B cell (primary cell): ENCODE measurements at regions of chr12 and their contacts with region 1.

Region 1: GRCh38 chr12:12376646-12377448 is 20.0 kb downstream of the BORCS5 start:
- DNase-seq: peak; percentile 78
- ATAC-seq: peak; percentile 64
- H3K4me3 ChIP-seq: no peak overlapping the region
- H3K4me3 Mint-ChIP-seq: no peak overlapping the region
- H3K27ac ChIP-seq: no peak overlapping the region
- H3K27ac Mint-ChIP-seq: no peak overlapping the region
- H3K4me1 ChIP-seq: peaks cover 10 to 12% of the 10 kb centered on the region in 2 donors
- H3K4me1 Mint-ChIP-seq: peaks cover 21% of the 10 kb centered on the region
- H3K27me3 ChIP-seq: no peaks in the 10 kb centered on the region
- H3K27me3 Mint-ChIP-seq: no peaks in the 10 kb centered on the region
- CTCF ChIP-seq: peak; percentile 79

Region 2: DNA sequence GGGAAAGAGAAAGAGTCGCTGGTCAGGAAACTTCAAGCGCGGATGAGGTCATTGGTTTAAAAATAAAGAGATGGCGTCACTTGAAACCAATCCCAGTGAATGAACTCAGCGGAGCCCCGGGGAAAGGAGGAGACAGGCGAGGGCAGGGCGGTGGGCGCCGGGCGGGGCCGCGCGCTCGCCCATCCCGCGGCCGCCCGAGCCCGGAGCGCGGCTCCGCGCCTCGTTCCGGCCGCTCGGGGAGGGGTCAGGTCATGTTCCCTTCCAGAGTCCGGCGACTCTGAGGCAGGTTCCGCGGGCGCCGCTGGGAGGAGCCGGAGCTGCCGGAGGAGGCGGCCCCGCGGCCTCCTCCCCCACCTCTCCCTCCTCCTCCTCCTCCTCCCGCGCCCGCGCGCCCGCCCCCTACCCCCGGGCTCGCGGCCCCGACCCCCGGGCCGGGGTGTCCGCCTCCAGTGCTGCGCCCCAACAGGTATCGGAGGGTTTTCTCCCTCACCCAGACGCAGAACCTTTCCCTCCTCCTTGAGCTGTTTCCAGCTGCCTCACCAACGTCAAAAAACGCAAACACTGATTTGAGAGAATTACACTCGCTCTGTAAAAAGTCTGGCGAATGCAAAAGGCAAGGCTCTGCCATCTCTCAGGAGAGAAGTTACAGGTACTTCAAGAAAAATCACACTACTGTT is 185.9 kb after region 1 on chr12 and contains the start of gene DUSP16:
- CTCF ChIA-PET with region 1: interaction called, 13 read pairs
- POLR2A ChIA-PET with region 1: no interaction called
- intact Hi-C with region 1: loop called (anchors 1 kb)
- DNase-seq: peak; percentile 90
- ATAC-seq: peak; percentile 70
- H3K4me3 ChIP-seq: peak within 1 kb of the TSS; percentile 55 to 78 (median 72)
- H3K4me3 Mint-ChIP-seq: peak within 1 kb of the TSS; percentile 95
- H3K27ac ChIP-seq: peak within 1 kb of the TSS; percentile 38 to 82
- H3K27ac Mint-ChIP-seq: peak within 1 kb of the TSS; percentile 92
- H3K4me1 ChIP-seq: peaks cover 17 to 18% of the 10 kb centered on the region in 2 donors
- H3K4me1 Mint-ChIP-seq: peaks cover 20% of the 10 kb centered on the region
- H3K27me3 ChIP-seq: peaks cover 0 to 9% (median 3%) of the 10 kb centered on the region in 4 experiments
- H3K27me3 Mint-ChIP-seq: peaks cover 8% of the 10 kb centered on the region
- CTCF ChIP-seq: no peak
- total RNA-seq, gene DUSP16: 5.6 and 5.9 TPM in 2 replicates

Region 3: GRCh38 chr12:12654691-12655460 is 278.0 kb after region 1 on chr12:
- CTCF ChIA-PET with region 1: interaction called, 45 read pairs
- POLR2A ChIA-PET with region 1: no interaction called
- intact Hi-C with region 1: loop called (anchors 1 kb)
- DNase-seq: no peak
- ATAC-seq: no peak
- H3K4me3 ChIP-seq: no peak overlapping the region
- H3K4me3 Mint-ChIP-seq: no peak overlapping the region
- H3K27ac ChIP-seq: no peak overlapping the region
- H3K27ac Mint-ChIP-seq: no peak overlapping the region
- H3K4me1 ChIP-seq: peaks cover 3 to 9% of the 10 kb centered on the region in 2 donors
- H3K4me1 Mint-ChIP-seq: peaks cover 6% of the 10 kb centered on the region
- H3K27me3 ChIP-seq: no peaks in the 10 kb centered on the region
- H3K27me3 Mint-ChIP-seq: no peaks in the 10 kb centered on the region
- CTCF ChIP-seq: no peak

Region 4: DNA sequence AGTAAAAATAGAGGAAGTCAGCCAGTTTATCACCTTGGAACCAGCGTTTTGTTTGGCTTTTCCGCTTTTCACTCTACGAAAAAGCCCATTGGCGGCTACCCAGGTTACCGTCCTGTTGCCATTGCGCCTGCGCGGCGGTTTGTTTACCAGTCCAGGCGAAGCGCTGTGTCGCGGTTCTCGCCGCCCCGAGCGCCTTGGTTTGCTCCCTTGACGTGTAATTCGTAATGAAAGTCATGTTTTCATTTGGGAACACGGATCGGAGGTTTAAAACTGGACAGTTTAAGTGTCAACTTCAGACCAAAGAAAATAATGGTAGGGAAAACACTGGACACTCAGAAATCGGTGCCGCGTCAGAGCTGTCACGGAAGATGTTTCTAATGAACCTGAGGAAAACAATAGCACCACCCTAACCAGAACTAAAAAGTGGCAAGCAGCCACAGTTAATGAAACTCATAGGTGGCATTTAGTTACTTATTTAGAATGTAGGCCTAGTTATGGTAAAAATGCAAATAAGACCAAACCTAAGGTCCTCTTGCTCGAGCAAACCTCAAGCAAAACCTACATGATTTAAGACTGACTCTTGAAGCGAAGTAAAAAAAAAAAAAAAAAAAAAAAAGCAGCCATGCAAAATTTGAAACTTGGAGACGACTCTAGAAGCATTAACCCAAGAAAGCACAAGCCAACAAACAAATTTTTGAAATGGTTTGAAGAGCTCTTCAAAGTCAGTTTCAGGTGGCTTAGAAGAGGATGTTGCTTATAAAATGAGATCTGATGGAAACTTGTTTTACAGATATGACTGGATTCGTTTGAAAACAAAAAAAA is 319.9 kb after region 1 on chr12:
- CTCF ChIA-PET with region 1: interaction called, 6 read pairs
- POLR2A ChIA-PET with region 1: interaction called, 13 read pairs
- intact Hi-C with region 1: no loop called
- DNase-seq: peak; percentile 95
- ATAC-seq: peak; percentile 86
- H3K4me3 ChIP-seq: peak overlapping the region; percentile 66 to 77 (median 68)
- H3K4me3 Mint-ChIP-seq: peak overlapping the region; percentile 99
- H3K27ac ChIP-seq: peak overlapping the region; percentile 97 to 98
- H3K27ac Mint-ChIP-seq: peak overlapping the region; percentile 100
- H3K4me1 ChIP-seq: peaks cover 15 to 23% of the 10 kb centered on the region in 2 donors
- H3K4me1 Mint-ChIP-seq: peaks cover 32% of the 10 kb centered on the region
- H3K27me3 ChIP-seq: no peaks in the 10 kb centered on the region
- H3K27me3 Mint-ChIP-seq: no peaks in the 10 kb centered on the region
- CTCF ChIP-seq: no peak

Region 5: DNA sequence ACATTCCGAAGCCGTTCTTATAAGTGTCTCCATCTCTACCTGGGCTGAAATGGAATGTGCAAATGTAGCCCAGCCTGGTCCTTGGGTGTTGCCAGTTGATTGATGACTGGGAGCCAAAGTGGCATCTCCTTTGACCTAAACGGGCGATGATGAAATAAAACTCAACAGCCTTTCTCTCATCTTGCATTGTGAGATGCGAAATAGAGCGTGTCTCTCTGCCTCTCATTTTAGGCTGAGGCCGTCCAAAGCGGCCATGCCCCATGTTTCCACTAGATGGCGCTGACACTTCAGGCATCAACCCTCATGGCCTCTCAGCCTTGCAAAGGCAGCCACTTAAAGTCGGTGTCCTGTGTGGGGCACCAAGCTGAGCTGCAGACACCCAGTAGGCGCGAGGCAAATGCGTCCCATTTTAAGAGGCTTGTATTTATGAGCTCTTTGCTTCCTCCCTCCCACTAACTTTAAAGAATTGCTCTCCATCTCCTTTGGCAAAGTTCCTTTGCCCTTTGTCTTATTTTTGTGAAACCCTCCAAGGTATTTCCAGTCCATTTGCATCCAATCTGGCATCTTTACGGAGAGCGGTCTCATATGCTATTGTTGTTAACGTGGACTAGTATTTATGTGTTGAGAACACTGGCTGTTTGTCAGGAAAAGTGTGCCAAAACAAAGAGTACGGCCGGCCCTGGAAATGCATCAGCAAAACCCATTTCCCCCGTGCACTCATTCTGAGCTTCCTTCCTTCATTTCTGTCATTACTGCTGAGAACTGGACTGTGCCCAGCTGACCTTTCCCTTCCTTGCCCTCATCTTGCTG is 539.5 kb after region 1 on chr12:
- CTCF ChIA-PET with region 1: interaction called, 3 read pairs
- POLR2A ChIA-PET with region 1: no interaction called
- intact Hi-C with region 1: loop called (anchors 1 kb)
- DNase-seq: peak; percentile 88
- ATAC-seq: peak; percentile 97
- H3K4me3 ChIP-seq: peak overlapping the region in 1 of 5 experiments; percentile 9
- H3K4me3 Mint-ChIP-seq: no peak overlapping the region
- H3K27ac ChIP-seq: no peak overlapping the region
- H3K27ac Mint-ChIP-seq: no peak overlapping the region
- H3K4me1 ChIP-seq: peaks cover 5 to 9% of the 10 kb centered on the region in 2 donors
- H3K4me1 Mint-ChIP-seq: peaks cover 6% of the 10 kb centered on the region
- H3K27me3 ChIP-seq: peaks cover 0 to 16% (median 6%) of the 10 kb centered on the region in 4 experiments
- H3K27me3 Mint-ChIP-seq: peaks cover 17% of the 10 kb centered on the region
- CTCF ChIP-seq: peak; percentile 94